Caco-2 (cell line): ENCODE measurements at regions of chr18 and their contacts with region 1.

Region 1: DNA sequence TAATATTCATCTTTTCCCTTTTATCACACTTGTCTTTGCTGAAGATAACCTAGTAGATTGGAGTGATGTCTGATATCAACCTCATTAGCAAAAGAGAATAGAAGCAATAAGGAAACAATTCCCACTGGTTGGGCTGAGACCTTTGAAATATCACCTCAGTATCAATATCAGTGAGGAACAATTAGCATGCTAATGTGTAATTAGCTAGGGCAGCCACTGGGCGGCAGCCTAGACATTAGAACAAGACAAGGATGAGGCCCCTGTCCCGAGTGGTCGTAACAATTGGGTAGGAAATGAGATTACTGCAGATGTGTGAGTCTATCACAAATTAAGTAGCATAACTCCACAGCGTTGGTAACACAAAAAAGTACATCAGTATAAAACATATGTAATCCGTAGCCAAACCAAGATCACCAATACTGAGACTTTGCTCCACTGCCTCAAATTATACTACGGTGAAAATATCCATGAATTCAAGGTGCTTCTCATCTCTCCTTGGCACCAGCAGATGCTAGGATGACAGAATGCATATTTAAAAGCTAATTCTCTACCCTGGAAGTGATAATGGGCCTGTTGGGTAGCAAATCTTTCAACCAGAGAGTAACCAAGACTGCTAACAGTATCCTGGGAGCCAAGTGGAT is 99.1 kb downstream of the ALPK2 start:
- DNase-seq: peak; percentile 66
- H3K4me3 ChIP-seq: no peak overlapping the region
- H3K4me3 Mint-ChIP-seq: no peak overlapping the region
- H3K27ac Mint-ChIP-seq: no peak overlapping the region
- H3K4me1 ChIP-seq: peaks cover 48% of the 10 kb centered on the region
- H3K4me1 Mint-ChIP-seq: no peaks in the 10 kb centered on the region
- H3K27me3 ChIP-seq: no peaks in the 10 kb centered on the region
- H3K27me3 Mint-ChIP-seq: no peaks in the 10 kb centered on the region
- CTCF ChIP-seq: peak; percentile 63 to 64

Region 2: DNA sequence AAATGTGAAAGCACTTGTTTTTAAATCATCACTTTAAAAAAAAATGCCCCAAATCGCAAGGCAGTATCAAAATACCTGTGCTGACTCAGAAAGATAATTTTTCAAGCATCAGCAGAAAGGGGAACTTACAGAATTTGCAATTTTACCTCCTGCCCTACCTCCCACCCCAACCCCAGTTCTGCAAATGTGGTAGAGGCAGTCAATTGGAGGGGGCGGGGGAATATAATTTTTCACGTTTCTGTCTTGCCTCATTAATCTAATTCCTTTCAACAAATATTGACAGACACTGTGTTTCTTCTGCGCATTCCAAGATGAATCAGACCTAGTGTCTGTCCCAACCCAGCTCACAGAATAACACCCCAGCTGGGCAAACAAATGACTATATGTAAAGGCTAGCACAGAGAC is 22.2 kb after region 1 on chr18:
- CTCF ChIA-PET with region 1: interaction called, 4 read pairs
- POLR2A ChIA-PET with region 1: no interaction called
- intact Hi-C with region 1: loop called (anchors 1 kb)
- DNase-seq: peak; percentile 50 to 53
- H3K4me3 ChIP-seq: no peak overlapping the region
- H3K4me3 Mint-ChIP-seq: peak overlapping the region; percentile 53
- H3K27ac Mint-ChIP-seq: peak overlapping the region; percentile 89
- H3K4me1 ChIP-seq: peaks cover 47% of the 10 kb centered on the region
- H3K4me1 Mint-ChIP-seq: peaks cover 37% of the 10 kb centered on the region
- H3K27me3 ChIP-seq: no peaks in the 10 kb centered on the region
- H3K27me3 Mint-ChIP-seq: no peaks in the 10 kb centered on the region
- CTCF ChIP-seq: no peak

Region 3: GRCh38 chr18:58590839-58591238 is 61.0 kb after region 1 on chr18:
- CTCF ChIA-PET with region 1: no interaction called
- POLR2A ChIA-PET with region 1: interaction called, 9 read pairs
- intact Hi-C with region 1: loop called (anchors 5 kb)
- DNase-seq: peak in 1 of 2 experiments; percentile 1
- H3K4me3 ChIP-seq: no peak overlapping the region
- H3K4me3 Mint-ChIP-seq: no peak overlapping the region
- H3K27ac Mint-ChIP-seq: peak overlapping the region; percentile 76
- H3K4me1 ChIP-seq: peaks cover 19% of the 10 kb centered on the region
- H3K4me1 Mint-ChIP-seq: peaks cover 6% of the 10 kb centered on the region
- H3K27me3 ChIP-seq: no peaks in the 10 kb centered on the region
- H3K27me3 Mint-ChIP-seq: no peaks in the 10 kb centered on the region
- CTCF ChIP-seq: no peak

Region 4: DNA sequence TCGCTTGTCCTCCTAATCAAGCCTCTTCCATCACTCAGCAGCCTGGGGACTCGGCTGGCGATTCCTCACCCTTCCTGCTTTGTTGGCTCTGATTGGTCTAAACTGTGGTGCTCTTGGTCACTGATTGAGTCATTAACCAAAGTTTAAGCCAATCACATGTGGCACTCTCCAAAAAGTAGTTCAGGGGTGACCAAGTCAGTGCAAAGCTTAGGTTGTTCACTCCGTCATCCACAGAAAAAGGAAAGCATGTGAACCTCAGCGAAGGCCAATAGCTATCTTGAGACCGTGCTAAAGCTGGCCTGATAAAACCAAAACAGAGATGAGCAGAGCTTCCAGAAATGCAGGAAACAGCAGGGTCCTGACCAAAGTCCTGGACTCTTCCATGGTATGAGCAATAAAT is 94.2 kb after region 1 on chr18:
- CTCF ChIA-PET with region 1: no interaction called
- POLR2A ChIA-PET with region 1: no interaction called
- intact Hi-C with region 1: loop called (anchors 2 kb)
- DNase-seq: peak in 1 of 2 experiments; percentile 46
- H3K4me3 ChIP-seq: no peak overlapping the region
- H3K4me3 Mint-ChIP-seq: no peak overlapping the region
- H3K27ac Mint-ChIP-seq: no peak overlapping the region
- H3K4me1 ChIP-seq: 0 out of 2 replicates have a peak, but pooled peaks cover 4% of the 10 kb centered on the region
- H3K4me1 Mint-ChIP-seq: peaks cover 6% of the 10 kb centered on the region
- H3K27me3 ChIP-seq: no peaks in the 10 kb centered on the region
- H3K27me3 Mint-ChIP-seq: no peaks in the 10 kb centered on the region
- CTCF ChIP-seq: no peak

Region 5: GRCh38 chr18:58661423-58661822 is 131.6 kb after region 1 on chr18:
- CTCF ChIA-PET with region 1: interaction called, 4 read pairs
- POLR2A ChIA-PET with region 1: no interaction called
- intact Hi-C with region 1: loop called (anchors 1 kb)
- DNase-seq: peak in 1 of 2 experiments; percentile 9
- H3K4me3 ChIP-seq: no peak overlapping the region
- H3K4me3 Mint-ChIP-seq: no peak overlapping the region
- H3K27ac Mint-ChIP-seq: no peak overlapping the region
- H3K4me1 ChIP-seq: no peaks in the 10 kb centered on the region
- H3K4me1 Mint-ChIP-seq: peaks cover 9% of the 10 kb centered on the region
- H3K27me3 ChIP-seq: no peaks in the 10 kb centered on the region
- H3K27me3 Mint-ChIP-seq: no peaks in the 10 kb centered on the region
- CTCF ChIP-seq: peak; percentile 13 to 26

Region 6: DNA sequence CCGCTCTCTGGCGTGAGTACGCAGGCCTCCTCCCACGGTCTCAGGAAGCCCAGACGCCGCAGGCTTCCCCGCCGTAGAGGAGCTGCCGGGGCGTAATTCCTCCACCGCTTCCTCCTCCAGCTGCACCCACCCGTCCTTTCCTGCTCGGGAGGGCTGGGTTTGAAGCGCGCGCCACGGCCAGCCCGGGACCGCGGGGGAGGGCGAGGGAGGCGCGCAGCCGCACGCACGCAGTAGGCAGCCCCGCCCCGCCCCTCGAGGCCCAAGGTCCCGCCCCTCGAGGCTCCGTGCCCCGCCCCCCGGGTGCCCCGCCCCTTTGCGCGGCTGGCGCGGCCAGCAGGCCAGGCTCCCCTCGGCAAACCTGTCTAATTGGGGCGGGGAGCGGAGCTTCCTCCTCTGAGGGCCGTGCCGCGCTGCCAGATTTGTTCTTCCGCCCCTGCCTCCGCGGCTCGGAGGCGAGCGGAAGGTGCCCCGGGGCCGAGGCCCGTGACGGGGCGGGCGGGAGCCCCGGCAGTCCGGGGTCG is 141.3 kb after region 1 on chr18 and contains the start of gene MALT1:
- CTCF ChIA-PET with region 1: interaction called, 3 read pairs
- POLR2A ChIA-PET with region 1: interaction called, 9 read pairs
- intact Hi-C with region 1: loop called (anchors 2 kb)
- DNase-seq: peak; percentile 85 to 90
- H3K4me3 ChIP-seq: peak within 1 kb of the TSS; percentile 52
- H3K4me3 Mint-ChIP-seq: peak within 1 kb of the TSS; percentile 94
- H3K27ac Mint-ChIP-seq: peak within 1 kb of the TSS; percentile 84
- H3K4me1 ChIP-seq: no peaks in the 10 kb centered on the region
- H3K4me1 Mint-ChIP-seq: peaks cover 22% of the 10 kb centered on the region
- H3K27me3 ChIP-seq: no peaks in the 10 kb centered on the region
- H3K27me3 Mint-ChIP-seq: no peaks in the 10 kb centered on the region
- CTCF ChIP-seq: no peak
- total RNA-seq, gene MALT1: 19.3 and 22.6 TPM in 2 replicates

Region 7: DNA sequence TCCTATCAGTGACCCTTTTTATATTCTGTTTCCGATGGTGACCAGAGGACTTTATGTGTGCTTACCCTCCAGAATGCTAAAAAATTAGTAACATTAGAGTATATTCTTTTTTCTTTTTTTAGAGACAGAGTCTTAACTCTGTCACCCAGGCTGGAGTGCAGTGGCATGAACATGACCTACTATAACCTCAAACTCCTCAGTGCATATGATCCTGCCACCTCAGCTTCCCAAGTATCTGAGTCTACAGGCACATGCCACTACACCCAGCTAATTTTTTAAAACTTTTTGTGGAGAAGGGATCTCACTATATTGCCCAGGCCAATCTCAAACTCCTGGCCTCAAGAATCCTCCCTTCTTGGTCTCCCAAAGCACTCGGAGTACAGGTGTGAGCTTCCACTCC is 216.1 kb after region 1 on chr18:
- CTCF ChIA-PET with region 1: no interaction called
- POLR2A ChIA-PET with region 1: no interaction called
- intact Hi-C with region 1: no loop called
- DNase-seq: no peak
- H3K4me3 ChIP-seq: no peak overlapping the region
- H3K4me3 Mint-ChIP-seq: no peak overlapping the region
- H3K27ac Mint-ChIP-seq: no peak overlapping the region
- H3K4me1 ChIP-seq: no peaks in the 10 kb centered on the region
- H3K4me1 Mint-ChIP-seq: no peaks in the 10 kb centered on the region
- H3K27me3 ChIP-seq: no peaks in the 10 kb centered on the region
- H3K27me3 Mint-ChIP-seq: no peaks in the 10 kb centered on the region
- CTCF ChIP-seq: no peak

Region 8: DNA sequence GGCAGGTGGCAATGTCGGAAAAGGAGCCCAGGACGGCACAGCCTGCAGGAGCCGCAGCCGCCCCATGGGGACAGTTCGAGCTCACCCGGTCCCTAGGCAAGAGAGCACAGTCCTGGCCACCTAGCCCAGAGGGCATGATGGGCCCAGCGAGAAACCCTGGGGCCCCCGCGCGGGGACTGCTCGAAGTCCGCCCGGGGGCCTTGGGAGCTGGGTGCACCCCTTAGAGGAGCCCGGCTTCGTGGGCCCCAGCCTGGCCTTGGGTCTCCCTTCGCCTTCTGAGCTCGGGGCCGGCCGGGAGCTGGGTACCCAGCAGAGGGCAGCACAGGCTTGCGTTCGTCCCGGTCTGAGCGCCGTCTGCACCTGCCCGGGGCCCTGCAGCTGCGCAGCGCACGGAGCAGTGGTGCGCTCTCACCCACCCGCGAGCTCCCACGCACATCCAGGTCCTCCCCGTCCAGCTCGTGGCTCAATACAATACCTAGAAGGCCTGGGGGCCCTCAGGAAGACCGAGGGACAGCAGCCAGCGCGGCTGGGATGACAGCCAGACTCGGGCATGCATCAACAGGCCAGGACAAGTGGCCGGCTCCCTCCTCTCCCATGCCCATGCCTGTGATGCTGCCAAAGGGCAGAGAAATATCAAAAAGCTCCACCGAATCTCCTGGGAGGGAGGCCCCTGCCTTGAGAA is 238.6 kb after region 1 on chr18:
- CTCF ChIA-PET with region 1: interaction called, 8 read pairs
- POLR2A ChIA-PET with region 1: no interaction called
- intact Hi-C with region 1: loop called (anchors 1 kb)
- DNase-seq: peak; percentile 53 to 73
- H3K4me3 ChIP-seq: no peak overlapping the region
- H3K4me3 Mint-ChIP-seq: peak overlapping the region; percentile 62
- H3K27ac Mint-ChIP-seq: no peak overlapping the region
- H3K4me1 ChIP-seq: no peaks in the 10 kb centered on the region
- H3K4me1 Mint-ChIP-seq: no peaks in the 10 kb centered on the region
- H3K27me3 ChIP-seq: no peaks in the 10 kb centered on the region
- H3K27me3 Mint-ChIP-seq: peaks cover 7% of the 10 kb centered on the region
- CTCF ChIP-seq: peak; percentile 35 to 71